SK-N-SH (cell line): ENCODE measurements at regions of chr17 and their contacts with region 1.

Region 1: GRCh38 chr17:6454957-6455705 is 10.9 kb downstream of the PIMREG start:
- DNase-seq: peak; percentile 74
- H3K4me3 ChIP-seq: no peak overlapping the region; a peak in 1 of 4 replicates
- H3K27ac ChIP-seq: no peak overlapping the region
- H3K4me1 ChIP-seq: peaks cover 3 to 17% of the 10 kb centered on the region in 2 experiments; a peak in 2 of 4 replicates
- H3K27me3 ChIP-seq: no peaks in the 10 kb centered on the region
- CTCF ChIP-seq: no peak
- EP300 ChIP-seq: no peak
- RAD21 ChIP-seq: no peak

Region 2: DNA sequence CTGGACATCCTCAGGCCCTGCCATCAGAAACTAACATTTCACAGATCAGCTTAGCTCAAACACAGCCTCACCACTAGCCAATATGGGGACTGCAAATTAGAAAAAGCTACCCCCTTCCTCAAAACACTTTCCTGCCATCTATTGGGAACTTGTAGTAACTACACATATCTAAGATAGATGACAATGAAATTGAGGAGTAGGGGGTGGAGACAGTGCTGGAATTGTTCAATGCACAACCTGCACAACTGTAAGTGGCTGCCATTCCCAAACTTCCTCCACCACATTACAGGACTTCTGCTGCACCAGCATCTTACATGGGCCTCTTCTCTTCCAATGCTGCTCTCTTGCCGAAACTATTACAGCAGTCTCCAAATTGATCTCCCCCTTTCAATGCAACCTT is 42.1 kb before region 1 on chr17:
- CTCF ChIA-PET with region 1: no interaction called
- POLR2A ChIA-PET with region 1: no interaction called
- DNase-seq: peak; percentile 54
- H3K4me3 ChIP-seq: no peak overlapping the region
- H3K27ac ChIP-seq: no peak overlapping the region
- H3K4me1 ChIP-seq: no peaks in the 10 kb centered on the region
- H3K27me3 ChIP-seq: peaks cover 76% of the 10 kb centered on the region
- CTCF ChIP-seq: peak; percentile 61
- EP300 ChIP-seq: no peak
- RAD21 ChIP-seq: peak; percentile 62

Region 3: GRCh38 chr17:6429266-6429665 is 25.9 kb before region 1 on chr17:
- CTCF ChIA-PET with region 1: no interaction called
- POLR2A ChIA-PET with region 1: no interaction called
- DNase-seq: no peak
- H3K4me3 ChIP-seq: no peak overlapping the region
- H3K27ac ChIP-seq: no peak overlapping the region
- H3K4me1 ChIP-seq: no peaks in the 10 kb centered on the region
- H3K27me3 ChIP-seq: no peaks in the 10 kb centered on the region
- CTCF ChIP-seq: no peak
- EP300 ChIP-seq: no peak
- RAD21 ChIP-seq: no peak

Region 4: GRCh38 chr17:6443692-6444569 is 11.2 kb before region 1 on chr17 and contains the start of gene PIMREG:
- CTCF ChIA-PET with region 1: interaction called, 3 read pairs
- POLR2A ChIA-PET with region 1: interaction called, 11 read pairs
- DNase-seq: peak; percentile 98
- H3K4me3 ChIP-seq: peak within 1 kb of the TSS; percentile 60 to 75
- H3K27ac ChIP-seq: peak within 1 kb of the TSS; percentile 82 to 86
- H3K4me1 ChIP-seq: peaks cover 0 to 11% of the 10 kb centered on the region in 2 experiments; a peak in 1 of 4 replicates
- H3K27me3 ChIP-seq: no peaks in the 10 kb centered on the region
- CTCF ChIP-seq: no peak
- EP300 ChIP-seq: no peak
- RAD21 ChIP-seq: no peak
- polyA plus RNA-seq, gene PIMREG: 17.2 and 19.6 TPM in 2 replicates

Region 5: GRCh38 chr17:6507535-6507934 is 52.4 kb after region 1 on chr17:
- CTCF ChIA-PET with region 1: no interaction called
- POLR2A ChIA-PET with region 1: no interaction called
- DNase-seq: no peak
- H3K4me3 ChIP-seq: no peak overlapping the region
- H3K27ac ChIP-seq: peak overlapping the region in 1 of 2 experiments; percentile 51; a peak in 2 of 4 replicates
- H3K4me1 ChIP-seq: peaks cover 0 to 34% of the 10 kb centered on the region in 2 experiments; a peak in 2 of 4 replicates
- H3K27me3 ChIP-seq: no peaks in the 10 kb centered on the region
- CTCF ChIP-seq: no peak
- EP300 ChIP-seq: no peak
- RAD21 ChIP-seq: no peak